Spleen (tissue), 13 donors: ENCODE measurements at regions of chr2 and their contacts with region 1.

Region 1: DNA sequence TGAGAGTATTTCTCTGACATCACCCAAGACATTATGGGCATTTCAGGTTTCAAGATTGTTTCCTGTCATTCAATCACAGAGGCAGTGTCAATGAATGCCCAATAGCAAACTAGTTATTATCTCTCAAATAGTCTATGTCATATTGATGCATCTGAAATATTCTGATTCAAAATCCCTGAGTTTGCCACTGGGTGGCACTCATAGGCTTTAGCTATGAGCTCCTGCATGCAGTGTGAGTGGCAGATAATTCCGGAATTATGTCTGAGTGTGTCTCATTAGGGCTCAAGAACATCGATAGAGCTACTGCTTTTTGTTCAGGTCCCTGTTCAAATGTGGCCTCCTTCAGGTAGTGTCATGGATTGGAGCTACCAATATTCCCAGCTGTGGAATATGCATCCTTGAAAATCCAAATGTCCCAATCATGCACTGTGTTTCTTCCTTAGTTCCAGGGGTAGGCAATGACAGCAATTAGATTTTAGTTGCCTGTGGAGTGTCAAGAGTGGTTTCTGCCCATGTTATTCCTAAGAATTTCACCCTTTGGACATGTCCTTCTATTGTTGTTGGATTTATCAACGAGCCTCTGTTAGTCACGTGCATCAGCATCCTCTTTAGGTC is 7.8 kb upstream of the OR6B3 start:
- DNase-seq: no peak
- H3K4me3 ChIP-seq: no peak overlapping the region
- H3K27ac ChIP-seq: no peak overlapping the region
- H3K4me1 ChIP-seq: no peaks in the 10 kb centered on the region
- H3K27me3 ChIP-seq: peaks cover 0 to 42% (median 7%) of the 10 kb centered on the region in 7 donors
- CTCF ChIP-seq: peak in 9 of 11 experiments; percentile 25 to 62 (median 53)
- POLR2A ChIP-seq: no peak

Region 2: DNA sequence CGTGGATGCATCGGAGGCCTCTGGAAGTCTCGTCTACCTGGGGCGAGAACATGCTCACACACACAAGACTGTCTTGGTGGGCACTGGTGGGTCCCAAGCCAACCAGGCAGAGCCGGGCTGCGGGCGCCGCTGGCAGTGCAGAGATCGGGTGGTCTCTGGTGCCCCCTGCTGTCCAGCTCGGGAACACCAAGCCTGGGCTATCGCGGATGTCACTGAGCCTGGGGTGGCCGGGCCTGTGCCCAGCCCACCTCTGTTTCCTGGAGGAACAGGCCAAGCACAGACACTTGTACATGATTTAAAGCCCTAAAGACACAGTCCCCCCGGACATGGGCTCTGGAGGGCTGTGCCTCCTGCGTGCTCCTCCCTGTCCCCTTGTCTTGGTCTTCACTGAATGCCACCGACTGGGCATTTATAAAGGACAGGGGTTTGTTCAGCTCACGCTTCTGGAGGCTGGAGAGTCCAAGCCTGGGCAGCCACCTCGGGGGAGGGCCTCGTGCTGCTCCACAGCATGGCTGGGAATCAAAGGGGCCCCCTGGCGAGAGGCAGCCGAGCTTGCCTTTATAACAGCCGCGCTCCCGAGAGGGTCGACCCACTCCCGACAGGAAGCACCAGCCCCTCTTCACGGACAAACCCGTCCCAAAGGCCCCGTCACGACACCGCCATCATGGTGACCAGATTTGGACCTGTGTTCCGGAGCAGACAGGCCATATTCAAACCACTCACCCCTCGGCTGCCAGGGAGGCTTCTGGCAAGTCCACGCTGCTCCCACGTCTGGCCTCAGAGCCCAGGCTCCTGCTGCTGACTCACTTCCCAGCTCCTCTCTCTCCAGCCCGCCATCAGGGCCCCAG is 82.9 kb after region 1 on chr2:
- intact Hi-C with region 1: loop called (anchors 5 kb)
- DNase-seq: peak; percentile 94
- H3K4me3 ChIP-seq: peak overlapping the region in 1 of 8 donors; percentile 3
- H3K27ac ChIP-seq: no peak overlapping the region
- H3K4me1 ChIP-seq: peaks cover 0 to 8% (median 6%) of the 10 kb centered on the region in 6 donors
- H3K27me3 ChIP-seq: peaks cover 0 to 55% (median 1%) of the 10 kb centered on the region in 7 donors
- CTCF ChIP-seq: peak; percentile 83 to 97 (median 96)
- POLR2A ChIP-seq: no peak

Region 3: DNA sequence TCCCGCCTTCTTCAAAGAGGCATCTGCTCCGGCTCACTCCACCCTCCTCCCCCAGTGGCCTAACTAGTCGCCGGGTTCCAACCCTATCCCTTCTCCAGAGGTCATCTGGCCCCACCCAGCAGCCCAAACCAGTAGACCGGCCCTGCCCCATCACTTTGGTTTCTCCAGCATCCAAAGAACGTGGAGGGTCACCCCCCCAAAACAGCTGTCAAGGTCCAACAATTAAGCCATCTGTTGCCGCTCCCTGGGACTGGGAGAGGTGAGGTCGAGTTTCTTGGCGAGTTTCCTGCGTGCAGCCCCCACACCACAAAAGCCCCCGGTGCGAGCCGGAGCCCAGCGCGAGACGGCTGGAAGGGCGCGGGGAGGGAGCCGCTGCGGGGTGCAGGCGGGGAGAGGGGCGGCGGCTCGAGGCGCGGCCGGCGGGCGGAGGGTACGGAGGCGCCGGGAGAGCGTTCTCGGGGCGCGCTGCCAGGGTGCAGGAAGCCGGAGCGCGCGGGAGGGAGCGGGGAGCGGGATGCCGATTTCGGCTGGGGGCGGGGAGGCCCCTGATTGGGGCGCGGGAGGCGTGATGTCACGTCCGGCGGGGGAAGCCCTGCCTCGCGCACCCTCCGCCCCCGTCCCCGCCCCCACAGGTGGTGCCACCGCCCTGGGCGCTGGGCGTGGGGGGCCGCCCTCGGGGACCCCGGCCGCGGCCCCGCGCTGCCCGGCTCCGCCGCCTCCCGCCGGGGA is 373.8 kb after region 1 on chr2:
- intact Hi-C with region 1: loop called (anchors 10 kb)
- DNase-seq: peak; percentile 95
- H3K4me3 ChIP-seq: peak overlapping the region; percentile 45 to 81 (median 63)
- H3K27ac ChIP-seq: peak overlapping the region in 6 of 8 donors; percentile 58 to 87 (median 78)
- H3K4me1 ChIP-seq: peaks cover 0 to 46% (median 29%) of the 10 kb centered on the region in 6 donors
- H3K27me3 ChIP-seq: peaks cover 0 to 70% (median 35%) of the 10 kb centered on the region in 7 donors
- CTCF ChIP-seq: no peak
- POLR2A ChIP-seq: no peak